ENCODE measurements at regions of chr6 and their contacts with region 1.

Region 1: GRCh38 chr6:56802584-56802983 is 152.3 kb upstream of the BEND6 start:
- DNase-seq: no peak
- ATAC-seq: no peak
- H3K4me3 ChIP-seq: no peak overlapping the region
- H3K27ac ChIP-seq: no peak overlapping the region
- H3K4me1 ChIP-seq: peaks cover 0 to 3% of the 10 kb centered on the region in 2 donors
- H3K27me3 ChIP-seq: no peaks in the 10 kb centered on the region

Region 2: GRCh38 chr6:56837311-56837894 is 34.8 kb after region 1 on chr6:
- intact Hi-C with region 1: loop called (anchors 5 kb)
- DNase-seq: no peak
- ATAC-seq: no peak
- H3K4me3 ChIP-seq: no peak overlapping the region
- H3K27ac ChIP-seq: no peak overlapping the region
- H3K4me1 ChIP-seq: no peaks in the 10 kb centered on the region
- H3K27me3 ChIP-seq: no peaks in the 10 kb centered on the region

Measured in aorta (tissue), 5 donors.